PC-9 (cell line): ENCODE measurements at regions of chr7 and their contacts with region 1.

Region 1: GRCh38 chr7:135801045-135801693 is 52.6 kb upstream of the FAM180A start:
- DNase-seq: peak; percentile 31 to 72
- H3K4me3 ChIP-seq: no peak overlapping the region; the same call in 1 of the 2 replicates
- H3K27ac ChIP-seq: no peak overlapping the region
- H3K4me1 ChIP-seq: peaks cover 14% of the 10 kb centered on the region
- H3K27me3 ChIP-seq: no peaks in the 10 kb centered on the region
- CTCF ChIP-seq: peak; percentile 94

Region 2: DNA sequence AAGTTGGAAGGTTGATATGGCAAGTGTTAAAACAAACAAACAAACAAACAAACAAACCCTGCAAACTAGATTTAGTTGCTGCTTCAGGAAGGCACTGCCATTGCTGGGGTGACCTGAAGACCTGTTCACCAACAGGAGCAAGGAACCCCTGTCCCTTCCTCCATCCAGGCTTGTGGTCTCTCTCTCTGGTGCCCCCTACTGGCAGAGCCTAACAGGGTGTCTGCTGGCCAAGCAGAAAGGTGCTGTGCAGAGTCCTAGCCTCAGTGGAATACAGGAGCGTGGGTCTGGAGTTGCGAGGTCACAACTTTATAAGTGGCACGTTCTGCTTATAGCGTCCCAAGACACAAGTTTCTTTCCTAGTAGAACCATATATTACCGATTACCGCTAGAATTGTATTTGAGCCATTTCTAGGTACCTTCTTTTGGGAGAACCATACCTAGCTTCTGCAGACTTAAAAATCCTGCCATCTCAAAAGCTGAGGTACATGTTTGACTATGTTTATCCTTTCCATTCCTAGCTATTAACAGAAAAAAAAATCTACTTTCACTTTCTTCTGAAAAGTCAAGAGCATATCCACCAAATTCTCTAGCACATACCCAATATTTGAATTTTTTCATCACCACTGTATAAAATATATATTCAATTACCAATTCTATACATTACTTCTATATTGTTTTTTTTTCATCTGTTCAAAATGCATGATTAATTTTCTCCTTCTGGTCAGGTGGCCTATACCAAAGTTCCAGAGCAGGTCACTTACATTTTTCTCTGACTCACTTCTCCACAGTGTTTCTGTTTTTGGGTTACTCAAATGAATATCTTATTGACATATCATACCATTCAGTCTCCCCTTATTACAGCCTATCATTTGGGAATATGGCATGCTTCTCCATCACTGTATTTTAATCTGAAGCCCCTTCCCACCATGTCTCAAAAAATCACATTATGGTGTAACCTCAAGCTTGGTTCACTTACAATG is 1050.8 kb before region 1 on chr7:
- CTCF ChIA-PET with region 1: no interaction called
- POLR2A ChIA-PET with region 1: no interaction called
- intact Hi-C with region 1: no loop called
- DNase-seq: peak in 1 of 2 experiments; percentile 22
- H3K4me3 ChIP-seq: no peak overlapping the region
- H3K27ac ChIP-seq: no peak overlapping the region
- H3K4me1 ChIP-seq: no peaks in the 10 kb centered on the region
- H3K27me3 ChIP-seq: no peaks in the 10 kb centered on the region
- CTCF ChIP-seq: peak; percentile 75

Region 3: DNA sequence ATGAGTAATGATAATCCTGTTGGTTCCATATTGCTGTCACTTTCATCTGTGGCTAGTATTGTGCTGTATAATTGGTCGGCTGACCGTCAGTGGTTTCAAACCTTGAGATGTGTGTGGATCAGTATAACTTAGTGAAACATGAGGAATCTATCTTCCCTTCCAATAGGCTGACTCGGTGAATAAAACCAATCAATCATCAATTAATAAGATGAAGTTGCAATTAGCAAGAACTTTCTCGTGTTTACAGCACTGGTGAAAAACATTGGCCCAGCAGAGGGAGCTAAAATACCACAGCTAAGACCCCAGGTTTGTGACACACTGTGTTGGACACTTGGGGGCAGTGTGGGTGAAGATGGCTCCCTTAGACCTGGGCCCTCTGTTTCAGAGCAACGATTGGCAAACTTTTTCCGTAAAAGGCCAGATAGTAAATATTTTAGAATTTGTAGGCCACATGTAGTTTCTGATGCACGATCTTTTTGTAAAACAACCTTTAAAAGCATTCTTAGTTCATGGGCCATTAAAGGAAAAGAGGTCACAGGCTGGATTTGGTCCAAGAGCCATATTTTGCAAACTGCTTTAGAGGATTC is 519.7 kb before region 1 on chr7:
- CTCF ChIA-PET with region 1: no interaction called
- POLR2A ChIA-PET with region 1: no interaction called
- intact Hi-C with region 1: loop called (anchors 5 kb)
- DNase-seq: peak; percentile 49 to 76
- H3K4me3 ChIP-seq: no peak overlapping the region
- H3K27ac ChIP-seq: no peak overlapping the region
- H3K4me1 ChIP-seq: no peaks in the 10 kb centered on the region
- H3K27me3 ChIP-seq: no peaks in the 10 kb centered on the region
- CTCF ChIP-seq: peak; percentile 99

Region 4: DNA sequence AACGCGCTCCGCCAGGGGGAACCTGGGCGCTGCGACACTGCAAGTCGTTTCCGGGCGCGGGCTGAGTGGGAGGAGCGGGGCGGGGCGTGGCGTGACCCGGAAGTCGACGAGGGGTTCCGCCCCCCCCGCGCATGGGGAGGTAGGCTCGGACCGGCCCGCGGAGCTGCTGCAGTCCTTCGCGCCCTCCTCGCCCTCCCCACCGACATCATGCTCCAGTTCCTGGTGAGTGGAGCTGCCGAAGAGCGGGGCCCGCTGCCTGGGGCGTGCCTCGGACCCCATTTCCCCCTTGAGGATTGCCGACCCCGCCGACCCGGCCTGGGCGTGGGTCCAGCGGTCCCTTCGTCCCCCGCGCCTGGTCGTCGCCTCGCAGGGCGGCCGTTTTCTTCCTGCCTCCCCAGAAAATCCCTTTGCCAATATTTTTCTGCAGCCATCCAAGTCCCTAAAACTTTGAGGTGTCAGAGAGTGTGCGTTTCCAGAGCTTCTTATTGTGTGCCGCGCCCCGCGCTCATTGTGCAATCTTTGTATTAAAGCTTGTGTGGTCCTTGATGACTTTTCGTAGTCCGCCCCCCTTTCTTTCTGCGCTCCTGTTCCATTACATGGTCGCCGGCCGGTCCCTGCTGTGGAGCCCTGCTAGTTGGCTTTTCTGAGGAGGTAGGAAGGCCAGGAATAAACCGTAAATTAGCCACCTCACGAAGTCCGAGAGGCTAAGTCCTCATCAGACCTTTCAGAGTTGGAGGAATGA is 138.6 kb before region 1 on chr7 and contains the start of gene STMP1:
- CTCF ChIA-PET with region 1: no interaction called
- POLR2A ChIA-PET with region 1: no interaction called
- intact Hi-C with region 1: loop called (anchors 2 kb)
- DNase-seq: peak; percentile 83 to 97
- H3K4me3 ChIP-seq: peak within 1 kb of the TSS; percentile 99
- H3K27ac ChIP-seq: peak within 1 kb of the TSS; percentile 92
- H3K4me1 ChIP-seq: peaks cover 16% of the 10 kb centered on the region
- H3K27me3 ChIP-seq: no peaks in the 10 kb centered on the region
- CTCF ChIP-seq: peak; percentile 89
- total RNA-seq, gene STMP1: 60.4 and 77.0 TPM in 2 replicates

Region 5: DNA sequence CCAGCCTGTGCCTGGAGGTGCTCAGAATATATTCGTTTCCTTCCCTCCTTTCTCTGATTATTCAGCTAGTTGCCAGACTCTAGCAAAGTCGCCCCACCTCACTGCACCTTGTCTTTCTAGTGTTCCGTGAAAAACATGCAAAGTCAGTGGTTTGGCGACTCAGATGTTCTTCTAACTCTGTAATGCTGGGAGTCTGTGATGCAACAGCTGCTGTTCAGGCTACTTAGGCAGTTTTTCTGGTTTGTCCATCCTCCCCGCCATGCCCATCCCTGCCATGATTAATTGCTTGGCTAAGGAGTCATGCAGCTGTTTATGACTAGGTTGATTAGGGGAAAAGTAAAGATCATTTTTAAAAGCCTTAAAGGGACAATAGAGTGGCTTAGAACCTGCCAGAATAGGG is 76.6 kb after region 1 on chr7:
- CTCF ChIA-PET with region 1: no interaction called
- POLR2A ChIA-PET with region 1: no interaction called
- intact Hi-C with region 1: no loop called
- DNase-seq: peak; percentile 84 to 95
- H3K4me3 ChIP-seq: peak overlapping the region; percentile 0; the same call in 1 of the 2 replicates
- H3K27ac ChIP-seq: peak overlapping the region; percentile 37
- H3K4me1 ChIP-seq: peaks cover 31% of the 10 kb centered on the region
- H3K27me3 ChIP-seq: no peaks in the 10 kb centered on the region
- CTCF ChIP-seq: no peak

Region 6: GRCh38 chr7:135933509-135934188 is 132.5 kb after region 1 on chr7:
- CTCF ChIA-PET with region 1: interaction called, 14 read pairs
- POLR2A ChIA-PET with region 1: no interaction called
- intact Hi-C with region 1: no loop called
- DNase-seq: no peak
- H3K4me3 ChIP-seq: no peak overlapping the region
- H3K27ac ChIP-seq: peak overlapping the region; percentile 6; the same call in 1 of the 2 replicates
- H3K4me1 ChIP-seq: no peaks in the 10 kb centered on the region
- H3K27me3 ChIP-seq: no peaks in the 10 kb centered on the region
- CTCF ChIP-seq: no peak

Region 7: DNA sequence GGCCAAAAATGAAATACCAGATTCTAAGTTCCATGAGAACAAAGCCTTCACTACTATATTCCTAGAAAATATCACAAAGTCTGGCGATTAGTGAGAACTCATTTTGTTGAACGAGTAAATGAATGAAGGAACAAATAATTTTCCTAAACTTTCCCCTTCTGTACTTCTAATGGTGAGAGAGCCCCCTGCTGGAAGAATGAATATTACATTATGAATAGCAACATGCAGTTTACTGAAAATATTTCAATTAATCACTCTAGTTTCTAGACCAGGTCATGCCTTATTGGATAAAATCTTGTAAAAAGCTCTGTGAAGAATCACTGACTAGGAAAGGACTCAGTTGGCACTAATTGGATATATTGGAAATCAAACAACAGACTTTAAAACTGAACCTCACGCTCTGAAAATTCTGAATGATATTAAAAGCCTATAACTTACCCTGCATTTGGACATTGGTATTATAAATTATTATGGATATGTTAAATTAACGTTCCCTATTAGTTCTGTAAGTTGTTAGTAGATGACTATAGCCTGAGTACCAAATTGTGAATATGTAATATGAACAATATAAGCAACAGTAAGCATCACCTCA is 208.4 kb after region 1 on chr7:
- CTCF ChIA-PET with region 1: no interaction called
- POLR2A ChIA-PET with region 1: no interaction called
- intact Hi-C with region 1: loop called (anchors 1 kb)
- DNase-seq: peak in 1 of 2 experiments; percentile 55
- H3K4me3 ChIP-seq: no peak overlapping the region
- H3K27ac ChIP-seq: no peak overlapping the region
- H3K4me1 ChIP-seq: no peaks in the 10 kb centered on the region
- H3K27me3 ChIP-seq: no peaks in the 10 kb centered on the region
- CTCF ChIP-seq: peak; percentile 95

Region 8: DNA sequence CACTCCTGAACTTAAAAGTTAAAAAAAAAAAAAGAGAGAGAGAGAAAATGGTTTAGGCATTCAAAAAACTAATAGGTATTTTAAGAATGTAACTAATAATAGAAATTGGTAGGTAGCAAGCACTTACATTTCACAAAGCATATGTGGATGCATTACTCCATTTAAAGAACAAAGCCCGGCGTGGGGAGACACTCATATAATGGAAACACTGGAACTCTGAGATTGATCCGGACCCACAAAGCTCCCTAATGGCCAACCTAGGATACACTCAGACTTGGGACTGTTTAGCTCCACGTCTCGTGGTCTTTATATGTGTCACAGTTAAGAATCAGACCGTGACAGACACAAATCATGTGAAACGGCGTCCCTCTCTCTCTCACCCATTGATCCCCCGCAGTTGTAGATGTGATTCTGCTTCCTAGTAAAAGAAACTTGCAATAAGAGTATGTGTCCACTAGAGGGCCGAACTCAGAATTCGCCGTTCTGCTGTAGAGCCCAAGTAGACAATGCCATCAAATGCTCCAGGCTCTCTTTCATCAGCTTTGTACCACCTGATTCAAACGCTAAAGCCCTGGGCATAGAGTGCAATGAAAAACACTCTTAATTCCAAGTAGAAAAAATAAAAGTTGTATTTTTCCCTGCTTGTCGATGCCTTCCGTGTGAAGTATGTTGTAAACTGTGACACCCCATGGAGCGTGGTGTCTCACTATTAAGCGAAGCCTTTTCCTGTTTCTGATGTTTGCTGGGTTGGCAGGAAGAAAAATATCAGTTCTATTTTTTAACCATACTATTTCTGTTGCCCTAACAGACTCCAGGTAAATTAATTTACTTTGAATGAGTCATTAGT is 605.0 kb after region 1 on chr7:
- CTCF ChIA-PET with region 1: no interaction called
- POLR2A ChIA-PET with region 1: no interaction called
- intact Hi-C with region 1: loop called (anchors 5 kb)
- DNase-seq: peak in 1 of 2 experiments; percentile 38
- H3K4me3 ChIP-seq: no peak overlapping the region
- H3K27ac ChIP-seq: no peak overlapping the region
- H3K4me1 ChIP-seq: no peaks in the 10 kb centered on the region
- H3K27me3 ChIP-seq: no peaks in the 10 kb centered on the region
- CTCF ChIP-seq: peak; percentile 92